Activated CD4-positive, alpha-beta T cell treated with anti-CD3 and anti-CD28 coated beads, Interleukin-2, amount 10 ng/mL, durations not matched to agents 24 days and 14 days (primary cell): ENCODE measurements at regions of chr4 and their contacts with region 1.

Region 1: GRCh38 chr4:38856524-38857337 is at the start of gene TLR6:
- DNase-seq: peak; percentile 93
- H3K4me3 Mint-ChIP-seq: peak within 1 kb of the TSS; percentile 80
- H3K27ac Mint-ChIP-seq: peak within 1 kb of the TSS; percentile 90
- H3K4me1 Mint-ChIP-seq: peaks cover 39% of the 10 kb centered on the region
- H3K27me3 Mint-ChIP-seq: no peaks in the 10 kb centered on the region
- total RNA-seq, gene TLR6: 0.88 and 1.1 TPM in 2 replicates

Region 2: DNA sequence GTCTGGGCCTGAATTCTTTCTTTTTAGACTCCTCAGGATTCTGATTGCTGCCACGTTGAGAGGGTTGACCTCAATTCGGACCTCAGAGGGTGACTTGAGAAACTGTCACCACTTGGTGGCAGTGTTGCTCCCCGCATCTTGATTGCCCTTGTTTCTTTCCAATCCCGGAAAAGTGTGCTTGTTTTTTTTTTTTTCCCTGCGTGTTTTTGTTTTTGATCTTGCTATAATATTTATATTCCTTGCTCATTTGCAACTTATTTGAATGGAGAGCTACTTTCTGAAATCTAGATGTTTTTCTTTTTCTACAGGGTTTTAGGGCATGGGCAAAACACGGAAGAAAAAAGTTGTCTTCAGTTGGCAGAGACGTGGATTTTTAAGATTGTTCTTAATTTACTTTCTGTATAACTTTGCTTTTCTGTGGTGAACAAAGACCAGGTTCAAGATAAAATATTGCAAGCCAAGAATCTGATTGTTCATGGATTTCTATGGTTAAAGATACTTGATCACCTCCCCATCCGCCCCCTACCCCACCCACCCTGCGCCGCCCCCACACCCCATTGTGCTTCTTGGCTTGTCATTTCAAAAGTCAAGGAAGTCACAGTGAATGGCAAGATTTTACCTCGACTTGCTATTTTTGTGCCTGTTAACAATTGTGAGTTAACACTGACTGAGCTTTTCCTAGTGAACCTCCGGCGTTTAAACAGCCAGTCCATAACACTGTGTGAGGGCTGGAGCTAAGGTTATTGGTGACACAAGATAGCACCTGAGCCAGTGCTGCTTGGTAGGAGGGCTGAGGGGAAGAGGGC is 794.4 kb before region 1 on chr4:
- intact Hi-C with region 1: loop called (anchors 5 kb)
- DNase-seq: peak; percentile 88
- H3K4me3 Mint-ChIP-seq: peak overlapping the region; percentile 88
- H3K27ac Mint-ChIP-seq: peak overlapping the region; percentile 69
- H3K4me1 Mint-ChIP-seq: peaks cover 12% of the 10 kb centered on the region
- H3K27me3 Mint-ChIP-seq: no peaks in the 10 kb centered on the region

Region 3: GRCh38 chr4:38179690-38180377 is 676.9 kb before region 1 on chr4:
- intact Hi-C with region 1: loop called (anchors 2 kb)
- DNase-seq: peak; percentile 92
- H3K4me3 Mint-ChIP-seq: no peak overlapping the region
- H3K27ac Mint-ChIP-seq: no peak overlapping the region
- H3K4me1 Mint-ChIP-seq: peaks cover 30% of the 10 kb centered on the region
- H3K27me3 Mint-ChIP-seq: peaks cover 17% of the 10 kb centered on the region

Region 4: DNA sequence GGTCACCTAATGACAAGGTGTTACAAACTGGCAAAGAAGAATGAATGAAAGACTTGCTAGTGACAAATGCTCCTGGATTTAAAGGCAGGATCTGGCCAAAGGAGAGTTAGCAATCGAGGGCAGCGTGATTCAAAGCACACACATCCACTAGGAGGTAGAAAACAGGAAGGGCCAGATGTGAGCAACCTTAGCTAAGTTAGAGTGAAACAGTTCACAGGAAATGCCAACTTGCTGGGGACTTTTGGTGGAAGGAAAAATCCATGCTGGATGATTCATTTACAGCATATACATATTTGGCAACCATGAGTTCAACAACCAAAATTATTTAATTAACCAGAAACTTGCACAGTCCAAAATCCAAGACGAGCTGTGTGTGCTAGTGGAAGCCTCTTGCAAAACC is 619.6 kb before region 1 on chr4:
- intact Hi-C with region 1: no loop called
- DNase-seq: no peak
- H3K4me3 Mint-ChIP-seq: no peak overlapping the region
- H3K27ac Mint-ChIP-seq: no peak overlapping the region
- H3K4me1 Mint-ChIP-seq: no peaks in the 10 kb centered on the region
- H3K27me3 Mint-ChIP-seq: peaks cover 11% of the 10 kb centered on the region

Region 5: DNA sequence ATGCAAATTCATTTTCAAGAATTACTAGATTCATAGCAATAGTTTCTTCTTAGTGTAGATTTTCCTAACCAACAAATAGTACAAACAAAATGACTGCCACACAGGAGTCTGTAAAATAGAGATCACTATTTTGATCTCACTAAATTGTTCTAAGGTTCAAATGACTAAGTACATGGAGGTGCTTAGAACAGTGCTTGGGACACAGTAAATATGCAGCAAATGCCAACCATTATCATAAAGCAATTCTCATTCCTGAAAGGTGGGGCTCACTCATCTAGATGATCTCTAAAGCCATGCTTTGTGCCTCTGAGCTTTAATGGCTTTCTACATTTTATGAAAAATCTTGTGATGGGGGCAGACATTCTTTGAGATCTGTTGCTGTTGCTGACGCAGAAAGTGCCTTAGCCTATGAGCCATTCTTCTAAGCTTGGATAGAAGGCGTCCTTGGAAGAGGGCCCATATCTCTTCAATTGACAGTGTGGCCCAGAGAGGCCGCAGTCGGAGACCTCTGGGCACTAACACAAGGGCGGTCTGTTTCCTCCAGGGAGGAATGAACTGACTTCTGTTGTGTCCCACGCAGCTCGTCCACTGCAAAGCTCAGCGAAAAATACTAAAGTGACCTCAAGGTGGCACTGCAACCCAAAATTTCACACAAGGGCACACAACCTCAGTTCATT is 97.5 kb before region 1 on chr4:
- intact Hi-C with region 1: loop called (anchors 1 kb)
- DNase-seq: peak; percentile 89
- H3K4me3 Mint-ChIP-seq: no peak overlapping the region
- H3K27ac Mint-ChIP-seq: no peak overlapping the region
- H3K4me1 Mint-ChIP-seq: peaks cover 23% of the 10 kb centered on the region
- H3K27me3 Mint-ChIP-seq: peaks cover 2% of the 10 kb centered on the region

Region 6: DNA sequence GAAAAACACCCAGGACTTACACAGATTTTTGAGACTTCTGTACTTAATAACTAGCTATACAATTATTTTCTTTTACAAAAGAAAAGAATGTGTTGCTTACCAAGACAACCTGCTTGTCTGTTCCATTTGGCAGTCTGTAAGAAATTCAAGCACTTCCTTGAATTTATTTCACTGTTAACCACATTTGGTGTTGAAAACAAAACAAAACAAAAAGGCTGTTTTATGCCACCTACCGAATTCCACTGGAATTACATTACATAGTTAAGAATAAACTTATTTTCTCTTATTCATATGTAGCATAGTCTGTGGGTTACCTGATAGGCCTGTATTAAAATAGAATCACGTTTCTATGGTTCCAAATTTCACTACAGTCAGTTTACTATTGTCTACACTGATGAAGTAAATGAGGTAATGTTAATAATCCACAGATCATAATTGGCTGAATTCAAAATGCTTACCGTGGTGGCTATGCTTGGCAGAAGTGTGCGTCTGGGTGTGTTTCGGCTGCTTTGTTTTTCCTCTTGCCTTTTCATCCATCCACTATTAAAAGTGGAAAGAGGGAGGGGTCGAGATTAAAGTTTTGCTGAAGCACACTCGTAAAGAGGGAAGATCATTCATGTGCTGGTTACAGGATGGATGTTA is 52.0 kb before region 1 on chr4 and contains the start of gene TLR1:
- intact Hi-C with region 1: loop called (anchors 1 kb)
- DNase-seq: peak; percentile 79
- H3K4me3 Mint-ChIP-seq: peak within 1 kb of the TSS; percentile 81
- H3K27ac Mint-ChIP-seq: peak within 1 kb of the TSS; percentile 86
- H3K4me1 Mint-ChIP-seq: peaks cover 29% of the 10 kb centered on the region
- H3K27me3 Mint-ChIP-seq: no peaks in the 10 kb centered on the region
- total RNA-seq, gene TLR1: 0.85 and 2.6 TPM in 2 replicates

Region 7: GRCh38 chr4:38889143-38889542 is 32.4 kb after region 1 on chr4:
- intact Hi-C with region 1: loop called (anchors 1 kb)
- DNase-seq: peak; percentile 68
- H3K4me3 Mint-ChIP-seq: peak overlapping the region; percentile 63
- H3K27ac Mint-ChIP-seq: peak overlapping the region; percentile 95
- H3K4me1 Mint-ChIP-seq: peaks cover 34% of the 10 kb centered on the region
- H3K27me3 Mint-ChIP-seq: no peaks in the 10 kb centered on the region